CD8-positive, alpha-beta T cell (primary cell): ENCODE measurements at regions of chr7 and their contacts with region 1.

Region 1: GRCh38 chr7:111741811-111742240 is 179.5 kb upstream of the IMMP2L start:
- DNase-seq: peak in 6 of 9 experiments; percentile 3 to 68 (median 36)
- ATAC-seq: peak; percentile 82
- H3K4me3 ChIP-seq: no peak overlapping the region
- H3K4me3 Mint-ChIP-seq: no peak overlapping the region
- H3K27ac ChIP-seq: no peak overlapping the region
- H3K27ac Mint-ChIP-seq: no peak overlapping the region
- H3K4me1 ChIP-seq: no peaks in the 10 kb centered on the region
- H3K4me1 Mint-ChIP-seq: peaks cover 3% of the 10 kb centered on the region
- H3K27me3 ChIP-seq: no peaks in the 10 kb centered on the region
- H3K27me3 Mint-ChIP-seq: peaks cover 2% of the 10 kb centered on the region
- CTCF ChIP-seq: peak; percentile 70

Region 2: DNA sequence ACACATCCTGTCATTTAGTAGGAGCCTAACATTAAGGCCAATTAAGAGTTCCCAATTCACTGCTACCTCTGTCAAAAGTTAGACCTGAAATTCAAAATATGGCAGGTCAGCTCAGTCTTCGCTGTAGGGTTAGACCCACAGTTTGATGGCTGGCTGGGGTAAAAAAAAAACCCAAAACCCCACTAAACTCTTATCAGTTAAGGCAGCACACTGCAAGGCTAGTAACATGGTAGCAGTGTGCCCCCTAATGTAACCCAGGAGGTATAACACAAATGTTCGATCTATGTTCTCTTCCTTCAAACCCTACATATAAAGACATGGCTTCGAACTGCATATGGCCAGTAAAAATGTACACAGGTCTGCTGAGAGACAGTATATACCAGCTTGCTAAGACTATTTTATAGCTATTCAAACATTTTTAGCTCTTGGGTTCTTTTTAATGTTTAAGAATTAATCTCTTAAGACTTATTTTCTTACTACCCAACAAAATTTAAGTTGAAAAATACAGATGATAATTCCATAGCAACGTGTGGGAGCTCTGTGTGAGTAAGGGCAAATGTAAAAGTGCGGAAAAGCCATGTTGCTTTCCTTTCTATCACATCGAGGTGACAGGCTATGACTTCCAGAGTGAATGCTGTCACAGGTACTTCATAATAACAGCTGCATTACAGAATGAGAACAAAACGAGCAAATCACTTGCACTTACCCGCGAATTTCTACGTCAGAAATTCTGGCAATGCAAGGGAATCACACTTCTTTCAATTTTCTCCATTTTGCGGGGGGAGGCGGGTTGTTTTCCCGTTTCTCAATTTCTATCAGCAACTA is 11.1 kb before region 1 on chr7:
- CTCF ChIA-PET with region 1: interaction called, 13 read pairs
- POLR2A ChIA-PET with region 1: no interaction called
- intact Hi-C with region 1: no loop called
- DNase-seq: peak in 1 of 9 experiments; percentile 30
- ATAC-seq: no peak
- H3K4me3 ChIP-seq: no peak overlapping the region
- H3K4me3 Mint-ChIP-seq: no peak overlapping the region
- H3K27ac ChIP-seq: no peak overlapping the region
- H3K27ac Mint-ChIP-seq: no peak overlapping the region
- H3K4me1 ChIP-seq: no peaks in the 10 kb centered on the region
- H3K4me1 Mint-ChIP-seq: no peaks in the 10 kb centered on the region
- H3K27me3 ChIP-seq: no peaks in the 10 kb centered on the region
- H3K27me3 Mint-ChIP-seq: peaks cover 2% of the 10 kb centered on the region
- CTCF ChIP-seq: no peak

Region 3: DNA sequence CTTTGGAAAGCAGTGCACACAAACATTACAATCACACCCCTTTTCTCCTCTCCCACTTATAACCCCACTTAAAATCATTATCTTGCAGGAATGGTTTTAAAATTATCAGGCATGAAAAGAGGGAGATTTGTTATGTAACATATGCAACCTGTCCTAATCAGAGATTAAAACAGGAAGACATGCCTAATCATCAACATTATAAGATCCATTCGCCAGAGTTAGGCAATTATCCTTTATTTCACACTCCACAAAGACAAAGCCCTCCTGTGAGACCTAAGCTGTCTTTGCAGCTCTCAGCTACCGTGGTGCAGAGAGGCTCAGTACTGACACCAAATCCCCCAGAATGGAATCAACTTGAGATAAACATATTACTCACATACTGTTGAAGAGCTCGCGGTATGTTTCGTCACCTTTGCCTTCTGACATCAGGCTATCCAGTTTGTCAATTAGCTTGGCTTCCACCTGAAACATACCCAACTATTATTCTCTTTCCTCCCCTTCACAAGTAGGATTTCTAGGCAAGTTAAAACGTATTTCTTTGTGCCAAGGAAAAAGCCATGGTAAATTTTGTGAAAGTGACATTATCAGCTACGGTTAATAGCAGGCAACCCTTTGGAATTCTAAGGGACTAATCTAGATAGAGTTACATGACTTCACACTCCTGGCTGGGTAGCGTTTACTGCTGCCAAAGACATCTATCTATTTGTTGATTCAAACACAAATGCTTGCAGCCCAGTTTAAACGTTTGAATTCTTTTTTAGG is 46.6 kb after region 1 on chr7:
- CTCF ChIA-PET with region 1: no interaction called
- POLR2A ChIA-PET with region 1: no interaction called
- intact Hi-C with region 1: no loop called
- DNase-seq: no peak
- ATAC-seq: no peak
- H3K4me3 ChIP-seq: no peak overlapping the region
- H3K4me3 Mint-ChIP-seq: no peak overlapping the region
- H3K27ac ChIP-seq: no peak overlapping the region
- H3K27ac Mint-ChIP-seq: no peak overlapping the region
- H3K4me1 ChIP-seq: no peaks in the 10 kb centered on the region
- H3K4me1 Mint-ChIP-seq: no peaks in the 10 kb centered on the region
- H3K27me3 ChIP-seq: no peaks in the 10 kb centered on the region
- H3K27me3 Mint-ChIP-seq: peaks cover 5% of the 10 kb centered on the region
- CTCF ChIP-seq: no peak

Region 4: DNA sequence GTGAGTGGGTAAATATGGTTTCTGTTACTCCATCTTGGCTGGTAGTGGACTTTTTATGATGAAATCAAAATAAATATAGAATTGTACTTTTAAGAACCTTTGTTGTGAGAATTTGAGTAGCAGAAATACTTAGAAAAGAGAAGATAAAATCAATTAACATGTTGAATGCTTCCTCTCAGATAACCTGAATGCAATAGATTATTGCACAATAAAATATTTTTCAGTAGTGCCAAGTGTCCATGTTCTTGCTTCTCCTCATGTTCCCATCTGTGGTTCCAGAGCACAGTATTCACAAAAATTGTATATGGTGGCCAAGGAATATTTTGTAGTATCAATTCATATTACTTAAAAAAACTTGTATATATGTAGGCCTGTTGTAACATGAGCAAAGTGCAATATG is 662.5 kb after region 1 on chr7:
- CTCF ChIA-PET with region 1: no interaction called
- POLR2A ChIA-PET with region 1: no interaction called
- intact Hi-C with region 1: no loop called
- DNase-seq: no peak
- ATAC-seq: no peak
- H3K4me3 ChIP-seq: no peak overlapping the region
- H3K4me3 Mint-ChIP-seq: no peak overlapping the region
- H3K27ac ChIP-seq: no peak overlapping the region
- H3K27ac Mint-ChIP-seq: no peak overlapping the region
- H3K4me1 ChIP-seq: no peaks in the 10 kb centered on the region
- H3K4me1 Mint-ChIP-seq: no peaks in the 10 kb centered on the region
- H3K27me3 ChIP-seq: no peaks in the 10 kb centered on the region
- H3K27me3 Mint-ChIP-seq: peaks cover 15% of the 10 kb centered on the region
- CTCF ChIP-seq: no peak

Region 5: GRCh38 chr7:112414855-112415490 is 673.1 kb after region 1 on chr7:
- CTCF ChIA-PET with region 1: interaction called, 6 read pairs
- POLR2A ChIA-PET with region 1: no interaction called
- intact Hi-C with region 1: loop called (anchors 2 kb)
- DNase-seq: peak in 2 of 9 experiments; percentile 22 to 39
- ATAC-seq: no peak
- H3K4me3 ChIP-seq: no peak overlapping the region
- H3K4me3 Mint-ChIP-seq: no peak overlapping the region
- H3K27ac ChIP-seq: no peak overlapping the region
- H3K27ac Mint-ChIP-seq: no peak overlapping the region
- H3K4me1 ChIP-seq: no peaks in the 10 kb centered on the region
- H3K4me1 Mint-ChIP-seq: no peaks in the 10 kb centered on the region
- H3K27me3 ChIP-seq: no peaks in the 10 kb centered on the region
- H3K27me3 Mint-ChIP-seq: peaks cover 4% of the 10 kb centered on the region
- CTCF ChIP-seq: no peak

Region 6: DNA sequence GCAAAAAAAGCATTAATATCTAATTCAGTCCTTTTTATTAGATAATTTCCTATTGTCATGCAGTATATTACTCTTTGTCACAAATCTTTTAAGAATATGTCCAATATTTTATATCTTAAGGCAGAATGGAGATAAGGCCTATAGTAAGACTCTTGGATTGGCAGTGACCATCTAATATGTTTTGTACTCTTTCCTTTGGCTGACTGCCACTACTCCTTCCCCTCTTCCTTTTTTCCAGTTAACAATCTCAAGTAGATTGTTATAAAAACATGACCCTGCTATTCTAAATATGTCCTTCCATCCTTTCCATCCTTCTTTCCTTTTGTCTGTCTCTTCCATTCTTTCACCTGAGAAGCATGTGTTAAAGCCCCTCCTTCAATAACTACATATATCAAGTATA is 1141.2 kb after region 1 on chr7:
- CTCF ChIA-PET with region 1: no interaction called
- POLR2A ChIA-PET with region 1: no interaction called
- intact Hi-C with region 1: loop called in 1 of 2 experiments (anchors 5 kb)
- DNase-seq: no peak
- ATAC-seq: no peak
- H3K4me3 ChIP-seq: no peak overlapping the region
- H3K4me3 Mint-ChIP-seq: no peak overlapping the region
- H3K27ac ChIP-seq: no peak overlapping the region
- H3K27ac Mint-ChIP-seq: no peak overlapping the region
- H3K4me1 ChIP-seq: no peaks in the 10 kb centered on the region
- H3K4me1 Mint-ChIP-seq: peaks cover 19% of the 10 kb centered on the region
- H3K27me3 ChIP-seq: no peaks in the 10 kb centered on the region
- H3K27me3 Mint-ChIP-seq: no peaks in the 10 kb centered on the region
- CTCF ChIP-seq: no peak

Region 7: DNA sequence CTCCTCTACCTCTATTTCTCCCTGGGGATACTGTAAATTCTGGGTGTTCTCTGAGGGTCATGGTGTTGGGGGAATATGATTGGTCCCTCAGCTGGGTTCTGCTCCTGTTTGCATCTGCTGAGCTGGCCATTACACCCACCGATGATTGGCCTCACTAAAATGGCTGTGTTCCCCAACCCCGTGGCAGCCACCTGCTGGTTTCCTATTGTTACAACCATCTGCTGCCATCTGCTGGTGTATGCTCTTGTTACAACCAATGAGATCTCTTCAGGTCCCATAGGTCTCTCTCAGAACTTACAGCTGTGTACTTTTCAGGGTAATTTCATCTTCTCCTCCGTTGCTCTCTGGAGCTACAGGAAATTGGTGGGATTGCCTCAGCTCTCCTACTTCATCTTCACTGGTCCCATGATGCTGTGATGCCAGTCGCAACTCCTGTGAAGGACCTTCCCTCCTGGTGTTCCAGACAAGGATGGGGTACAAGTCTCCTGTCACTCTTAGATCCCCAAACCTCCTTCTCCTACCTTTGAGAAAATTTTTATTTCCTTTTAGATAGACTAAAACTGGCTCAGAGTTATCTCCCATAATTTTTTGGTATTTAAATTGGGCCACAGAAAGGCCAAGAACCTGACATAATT is 1680.0 kb after region 1 on chr7:
- CTCF ChIA-PET with region 1: interaction called, 17 read pairs
- POLR2A ChIA-PET with region 1: no interaction called
- intact Hi-C with region 1: loop called in 1 of 2 experiments (anchors 2 kb)
- DNase-seq: peak; percentile 37 to 81 (median 70)
- ATAC-seq: peak; percentile 94
- H3K4me3 ChIP-seq: no peak overlapping the region
- H3K4me3 Mint-ChIP-seq: no peak overlapping the region
- H3K27ac ChIP-seq: no peak overlapping the region
- H3K27ac Mint-ChIP-seq: no peak overlapping the region
- H3K4me1 ChIP-seq: no peaks in the 10 kb centered on the region
- H3K4me1 Mint-ChIP-seq: peaks cover 3% of the 10 kb centered on the region
- H3K27me3 ChIP-seq: no peaks in the 10 kb centered on the region
- H3K27me3 Mint-ChIP-seq: peaks cover under 1% of the 10 kb centered on the region
- CTCF ChIP-seq: peak; percentile 89